ENCODE measurements at regions of chr19 and their contacts with region 1.

Region 1: GRCh38 chr19:4534836-4535658 is at the start of gene PLIN5:
- DNase-seq: peak; percentile 90 to 92
- ATAC-seq: peak; percentile 54 to 56
- H3K4me3 ChIP-seq: peak within 1 kb of the TSS; percentile 58 to 61 (median 58)
- H3K27ac ChIP-seq: peak within 1 kb of the TSS; percentile 89 to 98 (median 92)
- H3K4me1 ChIP-seq: peaks cover 37 to 38% of the 10 kb centered on the region in 2 donors
- H3K27me3 ChIP-seq: no peaks in the 10 kb centered on the region
- CTCF ChIP-seq: peak in 4 of 5 experiments; percentile 9 to 30 (median 16)
- POLR2A ChIP-seq: peak; percentile 97 to 98
- total RNA-seq, gene PLIN5: 23.5 to 127 (median 52.9) TPM

Region 2: GRCh38 chr19:4457654-4458395 is 77.2 kb before region 1 on chr19 and contains the start of gene UBXN6:
- in situ Hi-C with region 1: no loop called
- intact Hi-C with region 1: loop called (anchors 5 kb)
- DNase-seq: peak; percentile 96 to 97
- ATAC-seq: peak; percentile 86
- H3K4me3 ChIP-seq: peak within 1 kb of the TSS; percentile 56 to 90 (median 68)
- H3K27ac ChIP-seq: peak within 1 kb of the TSS; percentile 90 to 99 (median 95)
- H3K4me1 ChIP-seq: peaks cover 24 to 29% of the 10 kb centered on the region in 2 donors
- H3K27me3 ChIP-seq: no peaks in the 10 kb centered on the region
- CTCF ChIP-seq: peak in 2 of 5 experiments; percentile 8 to 34
- POLR2A ChIP-seq: no peak
- total RNA-seq, gene UBXN6: 93.8 to 230 (median 114) TPM

Region 3: GRCh38 chr19:4523306-4524110 is 11.5 kb before region 1 on chr19:
- in situ Hi-C with region 1: no loop called
- intact Hi-C with region 1: loop called (anchors 1 kb)
- DNase-seq: peak; percentile 35 to 70
- ATAC-seq: peak in 1 of 2 donors; percentile 14
- H3K4me3 ChIP-seq: no peak overlapping the region
- H3K27ac ChIP-seq: peak overlapping the region; percentile 43 to 97 (median 68)
- H3K4me1 ChIP-seq: peaks cover 11 to 13% of the 10 kb centered on the region in 2 donors
- H3K27me3 ChIP-seq: no peaks in the 10 kb centered on the region
- CTCF ChIP-seq: peak; percentile 26 to 87 (median 73)
- POLR2A ChIP-seq: no peak

Region 4: DNA sequence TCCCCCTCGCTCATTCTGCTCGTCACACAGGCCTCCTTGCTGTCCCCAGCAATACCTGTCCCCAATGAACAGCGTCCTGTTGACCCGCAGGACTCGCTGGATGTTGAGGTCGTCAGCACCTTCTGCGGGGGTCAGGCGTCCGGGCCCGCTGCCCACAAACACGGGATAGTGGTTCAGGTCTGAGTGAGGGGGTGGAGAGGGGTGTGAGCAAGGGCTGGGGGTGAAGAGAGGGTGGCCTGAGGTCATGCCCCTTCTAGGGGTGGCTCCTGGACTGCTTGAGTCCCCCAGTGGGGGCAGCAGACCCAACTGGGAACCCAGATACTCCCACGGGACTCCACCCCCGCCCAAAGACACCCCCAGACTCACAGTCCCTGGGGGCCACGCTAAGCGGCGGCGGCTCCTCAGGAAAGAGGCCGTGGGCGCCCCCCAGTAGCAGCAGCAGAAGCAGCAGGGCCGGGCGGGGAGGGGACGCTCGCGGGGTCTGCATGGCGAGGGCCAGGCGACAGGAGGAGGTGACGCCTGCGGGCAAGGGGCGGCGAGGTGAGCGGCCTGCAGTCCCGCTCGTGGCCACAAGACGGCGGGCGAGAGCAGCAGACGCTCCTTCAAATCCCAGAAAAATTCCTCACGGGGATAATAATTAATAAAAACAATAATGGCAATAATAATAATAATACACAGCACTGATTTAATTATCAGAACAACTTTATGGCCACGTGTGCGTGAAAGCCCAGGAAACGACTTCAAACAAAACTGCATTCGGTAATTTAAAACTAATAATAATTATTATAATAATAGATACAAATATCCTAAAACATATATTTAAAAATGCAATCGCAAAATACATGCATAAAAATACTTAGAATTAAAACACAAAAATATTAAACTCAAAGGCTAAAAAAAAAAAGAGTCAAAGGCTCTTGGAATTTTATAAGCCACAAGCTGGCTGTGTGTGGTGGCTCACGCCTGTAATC is 23.2 kb after region 1 on chr19:
- in situ Hi-C with region 1: no loop called
- intact Hi-C with region 1: loop called (anchors 2 kb)
- DNase-seq: no peak
- ATAC-seq: no peak
- H3K4me3 ChIP-seq: peak overlapping the region in 3 of 4 donors; percentile 36 to 54 (median 49)
- H3K27ac ChIP-seq: peak overlapping the region; percentile 33 to 81 (median 70)
- H3K4me1 ChIP-seq: no peaks in the 10 kb centered on the region
- H3K27me3 ChIP-seq: no peaks in the 10 kb centered on the region
- CTCF ChIP-seq: peak; percentile 92 to 100 (median 97)
- POLR2A ChIP-seq: no peak

Region 5: DNA sequence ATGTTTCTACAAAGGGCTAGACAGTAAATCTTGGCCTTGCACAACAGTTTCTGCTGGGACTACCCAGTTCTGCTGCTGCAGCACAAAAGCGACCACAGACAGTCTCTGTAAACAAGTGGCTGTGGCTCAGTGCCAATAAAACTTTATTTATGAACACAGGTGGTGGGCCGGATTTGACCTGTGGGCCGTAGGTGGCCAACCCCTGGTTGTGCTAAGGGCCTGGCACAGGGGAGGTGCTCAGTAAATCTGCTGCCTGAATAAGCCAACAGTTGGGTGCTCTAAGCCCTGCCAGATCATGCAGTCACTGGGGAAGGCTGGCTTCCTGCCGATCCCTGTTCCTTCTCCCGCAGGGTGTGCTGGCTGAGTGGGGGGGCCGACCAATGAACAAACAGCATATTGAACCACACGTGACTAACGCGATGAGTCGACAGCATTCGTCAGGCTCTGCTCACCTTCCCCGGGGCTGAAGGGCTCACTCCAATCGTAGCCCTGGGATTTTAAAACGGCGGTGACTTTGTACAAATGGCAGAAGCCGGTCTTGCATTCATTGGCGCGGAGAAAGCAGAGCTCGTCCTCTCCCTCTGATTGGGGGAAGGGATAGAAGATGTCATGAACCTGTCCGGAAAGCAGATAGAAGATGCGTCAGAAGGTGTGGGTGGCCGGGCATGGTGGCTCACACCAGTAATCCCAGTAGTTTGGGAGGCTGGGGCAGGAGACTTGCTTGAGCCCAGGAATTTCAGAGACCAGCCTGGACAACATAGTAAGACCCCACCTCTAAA is 159.4 kb after region 1 on chr19:
- in situ Hi-C with region 1: no loop called
- intact Hi-C with region 1: no loop called
- DNase-seq: peak; percentile 96 to 100
- ATAC-seq: peak; percentile 70 to 71
- H3K4me3 ChIP-seq: peak overlapping the region in 3 of 4 donors; percentile 21 to 35 (median 35)
- H3K27ac ChIP-seq: peak overlapping the region; percentile 95 to 97 (median 96)
- H3K4me1 ChIP-seq: peaks cover 53 to 57% of the 10 kb centered on the region in 2 donors
- H3K27me3 ChIP-seq: no peaks in the 10 kb centered on the region
- CTCF ChIP-seq: no peak
- POLR2A ChIP-seq: peak; percentile 77 to 87

Region 6: GRCh38 chr19:4791170-4792018 is 256.3 kb after region 1 on chr19 and contains the start of gene FEM1A:
- in situ Hi-C with region 1: no loop called
- intact Hi-C with region 1: loop called (anchors 10 kb)
- DNase-seq: peak; percentile 100
- ATAC-seq: peak; percentile 93
- H3K4me3 ChIP-seq: peak within 1 kb of the TSS; percentile 68 to 100 (median 92)
- H3K27ac ChIP-seq: peak within 1 kb of the TSS; percentile 91 to 100 (median 94)
- H3K4me1 ChIP-seq: peaks cover 40 to 46% of the 10 kb centered on the region in 2 donors
- H3K27me3 ChIP-seq: no peaks in the 10 kb centered on the region
- CTCF ChIP-seq: peak; percentile 97 to 98 (median 98)
- POLR2A ChIP-seq: peak; percentile 78 to 84
- total RNA-seq, gene FEM1A: 246 to 360 (median 300) TPM

Region 7: GRCh38 chr19:4976401-4977298 is 441.6 kb after region 1 on chr19:
- in situ Hi-C with region 1: no loop called
- intact Hi-C with region 1: loop called (anchors 10 kb)
- DNase-seq: peak; percentile 92 to 94
- ATAC-seq: peak; percentile 82 to 86
- H3K4me3 ChIP-seq: peak overlapping the region; percentile 26 to 40 (median 38)
- H3K27ac ChIP-seq: peak overlapping the region; percentile 85 to 96 (median 93)
- H3K4me1 ChIP-seq: peaks cover 80 to 82% of the 10 kb centered on the region in 2 donors
- H3K27me3 ChIP-seq: no peaks in the 10 kb centered on the region
- CTCF ChIP-seq: peak in 4 of 5 experiments; percentile 28 to 54 (median 38)
- POLR2A ChIP-seq: peak; percentile 64 to 79